Endothelial cell of umbilical vein (primary cell): ENCODE measurements at regions of chr12 and their contacts with region 1.

Region 1: DNA sequence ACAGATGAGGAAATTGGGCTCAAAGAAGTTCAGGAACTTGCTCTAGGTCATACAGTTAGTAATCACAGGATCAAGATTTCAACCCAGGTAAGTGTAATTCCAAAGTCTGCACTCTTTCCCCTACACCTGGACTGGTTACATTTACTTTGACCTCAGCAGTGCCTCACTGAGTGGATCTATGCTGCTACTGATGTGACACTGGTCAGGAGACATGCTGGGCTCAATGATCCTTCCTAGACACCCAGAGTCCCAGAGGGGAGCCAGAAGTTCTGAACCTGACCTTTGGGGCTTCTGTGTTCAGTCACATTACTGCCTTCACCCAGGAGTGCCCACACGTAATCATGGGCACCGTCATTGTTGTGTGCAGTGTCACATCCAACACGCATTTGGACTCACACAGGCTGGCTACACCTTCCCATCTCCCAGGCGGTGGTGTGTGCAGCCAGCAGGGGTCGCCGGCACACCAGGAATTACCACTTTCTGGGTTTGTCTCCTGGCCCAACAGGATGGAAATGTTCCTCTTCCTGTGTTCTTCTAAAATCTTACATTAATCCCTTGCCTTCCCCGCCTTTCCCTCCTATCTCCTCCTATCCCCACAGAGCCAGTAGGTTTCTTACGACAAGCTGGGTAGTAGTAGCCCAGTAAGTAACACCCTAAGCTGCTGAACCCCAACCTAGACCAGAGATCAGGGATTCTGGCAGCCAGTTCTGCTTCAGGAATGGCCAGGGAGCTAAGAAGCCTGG is 25.6 kb downstream of the CALCOCO1 start:
- DNase-seq: peak; percentile 69
- H3K4me3 ChIP-seq: no peak overlapping the region
- H3K27ac ChIP-seq: no peak overlapping the region
- H3K4me1 ChIP-seq: no peaks in the 10 kb centered on the region
- H3K27me3 ChIP-seq: peaks cover 57 to 72% of the 10 kb centered on the region in 2 experiments
- CTCF ChIP-seq: peak; percentile 95 to 96
- POLR2A ChIP-seq: no peak

Region 2: GRCh38 chr12:53727310-53728041 is 25.8 kb after region 1 on chr12 and contains the start of gene CALCOCO1:
- CTCF ChIA-PET with region 1: interaction called, 13 read pairs
- POLR2A ChIA-PET with region 1: no interaction called
- dilution Hi-C with region 1: no loop called
- intact Hi-C with region 1: no loop called
- DNase-seq: peak; percentile 100
- H3K4me3 ChIP-seq: peak within 1 kb of the TSS; percentile 44 to 85 (median 56)
- H3K27ac ChIP-seq: peak within 1 kb of the TSS; percentile 4
- H3K4me1 ChIP-seq: peaks cover 14% of the 10 kb centered on the region
- H3K27me3 ChIP-seq: peaks cover 4 to 8% of the 10 kb centered on the region in 2 experiments
- CTCF ChIP-seq: no peak
- POLR2A ChIP-seq: peak; percentile 73
- total RNA-seq, gene CALCOCO1: 61.8 and 70.9 TPM in 2 replicates

Region 3: GRCh38 chr12:53757095-53757770 is 55.5 kb after region 1 on chr12:
- CTCF ChIA-PET with region 1: interaction called, 11 read pairs
- POLR2A ChIA-PET with region 1: no interaction called
- dilution Hi-C with region 1: no loop called
- intact Hi-C with region 1: no loop called
- DNase-seq: peak; percentile 63
- H3K4me3 ChIP-seq: no peak overlapping the region
- H3K27ac ChIP-seq: no peak overlapping the region
- H3K4me1 ChIP-seq: peaks cover 3% of the 10 kb centered on the region
- H3K27me3 ChIP-seq: peaks cover 55 to 64% of the 10 kb centered on the region in 2 experiments
- CTCF ChIP-seq: peak; percentile 80 to 96
- POLR2A ChIP-seq: no peak